IMR-90 (cell line): ENCODE measurements at regions of chr12 and their contacts with region 1.

Region 1: GRCh38 chr12:90854136-90854689 is 100.8 kb downstream of the CCER1 start:
- DNase-seq: peak; percentile 63
- ATAC-seq: peak; percentile 92
- H3K4me3 ChIP-seq: no peak overlapping the region
- H3K27ac ChIP-seq: no peak overlapping the region
- H3K4me1 ChIP-seq: no peaks in the 10 kb centered on the region
- H3K27me3 ChIP-seq: no peaks in the 10 kb centered on the region
- CTCF ChIP-seq: peak; percentile 68
- POLR2A ChIP-seq: no peak
- RAD21 ChIP-seq: peak; percentile 58

Region 2: DNA sequence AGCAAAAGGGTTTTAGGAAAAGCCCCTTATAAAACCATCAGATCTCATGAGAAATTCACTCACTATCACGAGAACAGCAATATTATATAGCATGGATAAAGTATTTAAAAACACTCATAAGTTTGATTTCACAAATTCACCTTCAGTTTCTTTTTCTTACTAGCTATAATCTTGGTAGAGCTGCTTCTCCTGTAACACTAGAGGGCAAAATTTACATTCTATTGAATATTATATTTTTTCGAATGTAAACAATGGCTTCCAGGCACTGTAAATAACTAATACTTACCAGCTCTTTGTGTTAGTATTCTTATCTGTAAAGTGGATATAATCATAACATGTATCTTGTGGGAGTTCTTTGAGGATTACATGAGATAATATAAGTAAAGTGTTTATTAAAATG is 158.8 kb before region 1 on chr12:
- CTCF ChIA-PET with region 1: no interaction called
- POLR2A ChIA-PET with region 1: no interaction called
- dilution Hi-C with region 1: no loop called
- in situ Hi-C with region 1: no loop called
- intact Hi-C with region 1: loop called (anchors 5 kb)
- DNase-seq: peak; percentile 23
- ATAC-seq: peak; percentile 69
- H3K4me3 ChIP-seq: no peak overlapping the region
- H3K27ac ChIP-seq: no peak overlapping the region
- H3K4me1 ChIP-seq: no peaks in the 10 kb centered on the region
- H3K27me3 ChIP-seq: no peaks in the 10 kb centered on the region
- CTCF ChIP-seq: peak; percentile 32
- POLR2A ChIP-seq: no peak
- RAD21 ChIP-seq: no peak

Region 3: DNA sequence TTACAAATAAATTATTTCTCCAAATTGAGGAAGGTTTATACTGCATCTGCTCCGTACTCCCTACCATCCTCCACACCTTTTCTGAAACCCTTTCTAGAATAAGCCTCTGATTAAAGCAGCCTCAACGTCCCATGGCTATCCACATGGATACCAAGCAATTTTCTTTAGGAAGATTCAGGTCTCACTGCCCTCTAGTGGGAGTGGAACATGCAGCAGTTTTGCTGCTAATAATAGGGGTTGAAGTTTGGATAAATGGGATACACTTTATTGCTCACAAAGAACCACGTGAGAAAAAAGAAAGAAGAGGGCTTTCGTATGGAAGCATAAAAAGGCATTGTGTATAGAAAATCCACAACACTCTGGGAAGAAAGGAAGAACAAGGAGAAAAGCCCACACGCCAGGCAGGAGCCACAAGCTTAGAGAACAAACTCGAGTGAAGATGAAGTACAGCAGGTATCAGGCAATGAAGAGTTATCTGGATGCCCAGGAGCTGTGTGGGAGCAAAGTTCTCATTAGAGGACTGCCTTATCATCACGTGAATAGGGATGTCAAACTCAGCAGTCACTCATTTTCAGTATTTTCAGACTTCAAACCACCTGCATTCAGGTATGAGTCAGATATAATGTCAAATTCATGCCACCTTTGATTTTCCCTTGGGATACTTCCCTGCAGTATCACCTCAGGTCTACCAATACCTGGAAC is 55.0 kb after region 1 on chr12:
- CTCF ChIA-PET with region 1: no interaction called
- POLR2A ChIA-PET with region 1: no interaction called
- dilution Hi-C with region 1: no loop called
- in situ Hi-C with region 1: no loop called
- intact Hi-C with region 1: no loop called
- DNase-seq: peak; percentile 67
- ATAC-seq: peak; percentile 79
- H3K4me3 ChIP-seq: no peak overlapping the region
- H3K27ac ChIP-seq: no peak overlapping the region
- H3K4me1 ChIP-seq: peaks cover 2% of the 10 kb centered on the region; the same call in 1 of the 2 replicates
- H3K27me3 ChIP-seq: no peaks in the 10 kb centered on the region
- CTCF ChIP-seq: peak; percentile 67
- POLR2A ChIP-seq: no peak
- RAD21 ChIP-seq: peak; percentile 65

Region 4: GRCh38 chr12:91367234-91367849 is 513.1 kb after region 1 on chr12:
- CTCF ChIA-PET with region 1: no interaction called
- POLR2A ChIA-PET with region 1: no interaction called
- dilution Hi-C with region 1: no loop called
- in situ Hi-C with region 1: no loop called
- intact Hi-C with region 1: loop called (anchors 5 kb)
- DNase-seq: peak; percentile 18
- ATAC-seq: peak; percentile 84
- H3K4me3 ChIP-seq: no peak overlapping the region
- H3K27ac ChIP-seq: no peak overlapping the region
- H3K4me1 ChIP-seq: no peaks in the 10 kb centered on the region
- H3K27me3 ChIP-seq: peaks cover 4% of the 10 kb centered on the region
- CTCF ChIP-seq: peak; percentile 60
- POLR2A ChIP-seq: no peak
- RAD21 ChIP-seq: peak; percentile 59